Ovary (tissue), 10 donors: ENCODE measurements at regions of chr5 and their contacts with region 1.

Region 1: DNA sequence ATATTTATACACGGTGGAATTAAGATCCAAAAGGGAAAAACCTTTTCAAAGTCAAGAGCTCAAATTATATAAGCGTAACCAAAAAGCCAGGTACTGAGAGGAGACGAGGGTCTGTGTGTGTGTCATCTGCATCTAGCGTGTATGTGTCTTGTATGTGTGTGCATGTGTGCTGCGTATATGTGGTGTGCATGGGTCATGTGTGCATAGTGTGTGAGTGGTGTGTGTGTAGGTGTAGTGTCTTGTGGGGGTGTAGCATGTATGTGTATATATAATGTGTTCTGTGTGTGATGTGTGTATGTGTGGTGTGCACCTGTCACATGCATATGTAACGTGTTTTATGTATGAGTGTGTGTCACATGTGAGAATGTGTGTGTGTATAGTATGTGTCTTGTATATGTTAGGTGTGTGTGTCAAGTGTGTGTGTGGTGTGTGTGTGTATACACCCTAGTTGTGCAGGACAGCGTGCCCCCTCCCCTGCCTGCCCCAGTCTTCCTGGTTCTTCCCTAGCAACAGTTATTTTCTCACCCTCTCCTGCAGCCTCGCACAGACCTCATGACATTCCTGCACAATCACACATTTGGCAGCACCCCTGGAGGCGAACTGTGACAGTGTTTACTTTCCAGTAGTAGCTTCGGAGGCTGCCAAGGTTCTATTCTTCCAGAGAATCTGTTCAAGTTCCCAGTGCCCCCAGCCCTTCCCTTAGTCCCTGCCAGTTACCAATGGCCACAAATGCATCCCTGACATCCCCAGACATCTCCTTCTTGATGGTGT is 27.1 kb upstream of the TNIP1 start:
- DNase-seq: no peak
- H3K4me3 ChIP-seq: no peak overlapping the region
- H3K27ac ChIP-seq: no peak overlapping the region
- H3K4me1 ChIP-seq: peaks cover 18% of the 10 kb centered on the region
- H3K27me3 ChIP-seq: no peaks in the 10 kb centered on the region
- CTCF ChIP-seq: no peak
- EP300 ChIP-seq: no peak
- POLR2A ChIP-seq: no peak

Region 2: DNA sequence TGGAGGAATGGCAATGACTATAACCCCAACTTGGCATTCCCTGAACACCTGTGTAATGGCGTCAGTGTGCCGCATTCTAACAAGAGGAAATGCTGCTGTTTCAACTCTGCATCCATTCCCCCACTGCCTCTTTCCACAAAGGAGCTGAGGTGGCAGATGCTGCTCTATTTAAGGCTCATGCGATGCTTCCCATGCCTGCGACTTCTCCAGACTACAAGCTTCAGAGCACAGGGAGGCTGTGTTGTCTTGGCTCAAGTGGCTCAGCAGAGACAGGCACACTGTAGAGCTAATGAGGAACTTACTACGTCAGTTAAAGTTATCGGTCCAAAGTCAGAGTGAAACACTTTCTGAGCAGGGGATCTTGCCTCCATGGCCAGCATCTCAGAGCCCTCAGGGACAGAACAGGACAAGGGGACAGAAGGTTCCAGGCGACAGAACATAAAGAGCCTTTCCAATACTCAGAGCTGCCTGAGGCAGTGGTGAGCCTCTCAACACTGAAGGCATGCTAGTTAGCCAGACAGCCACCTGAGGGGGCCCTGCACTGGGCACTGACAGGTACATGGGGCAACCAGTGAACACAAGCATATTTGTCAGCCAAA is 48.9 kb before region 1 on chr5:
- intact Hi-C with region 1: loop called in 1 of 4 experiments (anchors 2 kb)
- DNase-seq: no peak
- H3K4me3 ChIP-seq: no peak overlapping the region
- H3K27ac ChIP-seq: no peak overlapping the region
- H3K4me1 ChIP-seq: peaks cover 13% of the 10 kb centered on the region
- H3K27me3 ChIP-seq: no peaks in the 10 kb centered on the region
- CTCF ChIP-seq: no peak
- EP300 ChIP-seq: no peak
- POLR2A ChIP-seq: no peak